ENCODE measurements at regions of chr1 and their contacts with region 1.

Region 1: GRCh38 chr1:161726596-161727457 is 5.5 kb downstream of the FCRLB start:
- DNase-seq: no peak
- H3K4me3 ChIP-seq: peak overlapping the region; percentile 80
- H3K27me3 ChIP-seq: no peaks in the 10 kb centered on the region
- CTCF ChIP-seq: no peak

Region 2: GRCh38 chr1:161706482-161707347 is 20.1 kb before region 1 on chr1 and contains the start of gene FCRLA:
- CTCF ChIA-PET with region 1: interaction called, 21 read pairs
- POLR2A ChIA-PET with region 1: no interaction called
- DNase-seq: peak; percentile 87
- H3K4me3 ChIP-seq: no peak within 1 kb of the TSS
- H3K27me3 ChIP-seq: no peaks in the 10 kb centered on the region
- CTCF ChIP-seq: no peak
- polyA plus RNA-seq, gene FCRLA: 0.97 and 2.0 TPM in 2 replicates

Region 3: GRCh38 chr1:161801955-161802354 is 75.1 kb after region 1 on chr1:
- CTCF ChIA-PET with region 1: no interaction called
- POLR2A ChIA-PET with region 1: no interaction called
- DNase-seq: no peak
- H3K4me3 ChIP-seq: no peak overlapping the region
- H3K27me3 ChIP-seq: no peaks in the 10 kb centered on the region
- CTCF ChIP-seq: no peak

Region 4: GRCh38 chr1:161905269-161905884 is 178.6 kb after region 1 on chr1:
- CTCF ChIA-PET with region 1: no interaction called
- POLR2A ChIA-PET with region 1: no interaction called
- DNase-seq: no peak
- H3K4me3 ChIP-seq: no peak overlapping the region
- H3K27me3 ChIP-seq: no peaks in the 10 kb centered on the region
- CTCF ChIP-seq: peak; percentile 37